ENCODE measurements at regions of chr17 and their contacts with region 1.

Region 1: GRCh38 chr17:55458977-55459376 is 37.3 kb upstream of the MMD start:
- DNase-seq: peak; percentile 87
- H3K4me3 ChIP-seq: no peak overlapping the region
- H3K27ac ChIP-seq: peak overlapping the region; percentile 38
- H3K4me1 ChIP-seq: peaks cover 10% of the 10 kb centered on the region
- H3K27me3 ChIP-seq: no peaks in the 10 kb centered on the region
- CTCF ChIP-seq: no peak

Region 2: GRCh38 chr17:55098765-55099164 is 360.2 kb before region 1 on chr17:
- CTCF ChIA-PET with region 1: no interaction called
- dilution Hi-C with region 1: no loop called
- in situ Hi-C with region 1: no loop called
- intact Hi-C with region 1: no loop called
- DNase-seq: no peak
- H3K4me3 ChIP-seq: no peak overlapping the region
- H3K27ac ChIP-seq: no peak overlapping the region
- H3K4me1 ChIP-seq: no peaks in the 10 kb centered on the region
- H3K27me3 ChIP-seq: no peaks in the 10 kb centered on the region
- CTCF ChIP-seq: no peak

Region 3: GRCh38 chr17:55121268-55121667 is 337.7 kb before region 1 on chr17:
- CTCF ChIA-PET with region 1: no interaction called
- dilution Hi-C with region 1: no loop called
- in situ Hi-C with region 1: no loop called
- intact Hi-C with region 1: no loop called
- DNase-seq: no peak
- H3K4me3 ChIP-seq: no peak overlapping the region
- H3K27ac ChIP-seq: no peak overlapping the region
- H3K4me1 ChIP-seq: no peaks in the 10 kb centered on the region
- H3K27me3 ChIP-seq: no peaks in the 10 kb centered on the region
- CTCF ChIP-seq: no peak

Region 4: DNA sequence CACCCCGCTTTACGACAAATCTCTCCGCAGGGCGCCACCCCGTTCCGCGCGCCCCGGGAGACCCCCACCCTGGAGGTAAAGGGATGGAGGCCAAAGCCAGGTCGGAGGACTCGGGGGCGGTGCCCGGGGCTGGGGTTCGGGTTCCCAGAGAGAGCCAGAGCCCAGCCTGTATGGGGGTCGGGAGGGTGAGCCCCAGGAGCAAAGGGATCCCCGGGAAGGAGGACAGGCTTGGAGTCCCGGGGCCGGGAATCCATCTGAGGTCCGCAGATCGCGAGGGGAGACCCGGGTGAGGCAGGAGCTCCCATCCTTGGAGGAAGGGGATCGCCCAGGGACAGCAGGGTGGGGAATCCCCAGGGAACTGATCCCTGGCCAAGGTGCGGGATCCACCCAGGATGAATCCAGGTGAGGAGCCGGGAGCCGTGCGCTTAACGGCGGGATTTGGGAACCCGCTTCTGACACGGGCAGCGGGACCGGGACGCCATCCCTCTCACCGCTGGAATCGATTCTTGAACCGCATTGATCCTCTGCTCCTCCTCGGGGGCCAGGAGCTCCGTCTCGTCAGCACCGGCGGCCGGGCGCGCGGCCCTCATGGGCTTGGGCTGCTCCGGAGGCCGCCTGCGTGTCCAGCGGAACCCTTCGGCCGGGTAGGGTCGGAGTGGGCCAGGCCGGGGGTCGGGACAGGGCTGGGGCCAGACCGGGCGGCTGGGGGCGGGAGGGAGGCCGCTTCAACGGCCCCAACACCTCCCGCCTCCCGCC is 37.6 kb before region 1 on chr17 and contains the start of gene MMD:
- CTCF ChIA-PET with region 1: no interaction called
- dilution Hi-C with region 1: no loop called
- in situ Hi-C with region 1: no loop called
- intact Hi-C with region 1: loop called (anchors 5 kb)
- DNase-seq: peak; percentile 63
- H3K4me3 ChIP-seq: peak within 1 kb of the TSS; percentile 84 to 92 (median 85)
- H3K27ac ChIP-seq: peak within 1 kb of the TSS; percentile 89
- H3K4me1 ChIP-seq: peaks cover 10% of the 10 kb centered on the region
- H3K27me3 ChIP-seq: no peaks in the 10 kb centered on the region
- CTCF ChIP-seq: no peak
- total RNA-seq, gene MMD: 7.8 to 9.0 TPM